Naive thymus-derived CD4-positive, alpha-beta T cell (primary cell): ENCODE measurements at regions of chr5 and their contacts with region 1.

Region 1: GRCh38 chr5:148374692-148375360 is 8.9 kb upstream of the FBXO38 start:
- DNase-seq: peak in 6 of 9 donors; percentile 20 to 38 (median 24)
- ATAC-seq: peak; percentile 84
- H3K4me3 ChIP-seq: no peak overlapping the region
- H3K4me3 Mint-ChIP-seq: no peak overlapping the region
- H3K27ac ChIP-seq: no peak overlapping the region
- H3K27ac Mint-ChIP-seq: no peak overlapping the region
- H3K4me1 ChIP-seq: peaks cover 0 to 5% of the 10 kb centered on the region in 2 donors
- H3K4me1 Mint-ChIP-seq: peaks cover 0 to 16% (median 11%) of the 10 kb centered on the region in 7 donors
- H3K27me3 ChIP-seq: no peaks in the 10 kb centered on the region
- H3K27me3 Mint-ChIP-seq: no peaks in the 10 kb centered on the region

Region 2: DNA sequence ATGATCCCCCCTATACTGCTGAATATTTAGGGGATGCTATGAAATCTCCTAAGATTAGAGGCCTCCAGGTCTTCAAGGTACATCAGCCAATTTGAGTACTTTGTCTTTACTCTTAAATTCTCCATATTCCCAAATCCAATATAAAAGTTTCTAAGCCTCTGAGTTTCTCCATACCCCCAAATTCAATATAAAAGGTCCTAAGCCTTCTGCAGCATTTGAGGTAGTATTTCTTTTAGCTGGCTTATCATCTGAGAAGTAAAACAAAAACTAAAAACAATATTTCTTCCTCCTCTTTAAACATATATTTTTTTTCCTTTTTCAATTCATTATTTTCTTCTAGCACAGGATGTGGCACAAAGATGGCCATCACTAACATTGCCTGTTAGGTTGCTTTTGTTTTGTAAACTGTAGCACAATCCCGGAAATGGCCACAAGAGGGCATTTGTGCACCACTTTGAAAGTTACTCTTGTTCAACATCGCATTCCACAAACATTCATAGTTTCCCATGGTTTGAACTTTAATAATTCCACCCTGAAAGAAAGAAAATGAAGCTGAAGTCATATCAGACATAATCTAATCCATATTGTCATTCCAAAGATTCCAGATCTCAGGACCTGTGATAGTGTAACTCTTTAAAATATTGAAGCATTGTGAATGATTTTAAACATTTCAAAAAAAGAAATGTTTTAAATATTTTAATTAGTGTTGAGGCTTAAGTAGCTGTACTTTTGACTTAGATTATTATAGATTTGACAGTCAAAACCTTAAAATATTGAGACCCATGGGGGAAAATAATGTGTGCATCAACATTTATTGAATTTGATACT is 517.3 kb before region 1 on chr5:
- CTCF ChIA-PET with region 1: no interaction called
- POLR2A ChIA-PET with region 1: no interaction called
- intact Hi-C with region 1: loop called in 1 of 2 experiments (anchors 5 kb)
- DNase-seq: peak in 5 of 9 donors; percentile 7 to 32 (median 11)
- ATAC-seq: peak; percentile 57
- H3K4me3 ChIP-seq: no peak overlapping the region
- H3K4me3 Mint-ChIP-seq: no peak overlapping the region
- H3K27ac ChIP-seq: no peak overlapping the region
- H3K27ac Mint-ChIP-seq: no peak overlapping the region
- H3K4me1 ChIP-seq: no peaks in the 10 kb centered on the region
- H3K4me1 Mint-ChIP-seq: peaks cover 0 to 4% (median 0%) of the 10 kb centered on the region in 7 donors
- H3K27me3 ChIP-seq: peaks cover 0 to 3% of the 10 kb centered on the region in 2 donors
- H3K27me3 Mint-ChIP-seq: peaks cover 4 to 16% (median 9%) of the 10 kb centered on the region in 5 donors

Region 3: DNA sequence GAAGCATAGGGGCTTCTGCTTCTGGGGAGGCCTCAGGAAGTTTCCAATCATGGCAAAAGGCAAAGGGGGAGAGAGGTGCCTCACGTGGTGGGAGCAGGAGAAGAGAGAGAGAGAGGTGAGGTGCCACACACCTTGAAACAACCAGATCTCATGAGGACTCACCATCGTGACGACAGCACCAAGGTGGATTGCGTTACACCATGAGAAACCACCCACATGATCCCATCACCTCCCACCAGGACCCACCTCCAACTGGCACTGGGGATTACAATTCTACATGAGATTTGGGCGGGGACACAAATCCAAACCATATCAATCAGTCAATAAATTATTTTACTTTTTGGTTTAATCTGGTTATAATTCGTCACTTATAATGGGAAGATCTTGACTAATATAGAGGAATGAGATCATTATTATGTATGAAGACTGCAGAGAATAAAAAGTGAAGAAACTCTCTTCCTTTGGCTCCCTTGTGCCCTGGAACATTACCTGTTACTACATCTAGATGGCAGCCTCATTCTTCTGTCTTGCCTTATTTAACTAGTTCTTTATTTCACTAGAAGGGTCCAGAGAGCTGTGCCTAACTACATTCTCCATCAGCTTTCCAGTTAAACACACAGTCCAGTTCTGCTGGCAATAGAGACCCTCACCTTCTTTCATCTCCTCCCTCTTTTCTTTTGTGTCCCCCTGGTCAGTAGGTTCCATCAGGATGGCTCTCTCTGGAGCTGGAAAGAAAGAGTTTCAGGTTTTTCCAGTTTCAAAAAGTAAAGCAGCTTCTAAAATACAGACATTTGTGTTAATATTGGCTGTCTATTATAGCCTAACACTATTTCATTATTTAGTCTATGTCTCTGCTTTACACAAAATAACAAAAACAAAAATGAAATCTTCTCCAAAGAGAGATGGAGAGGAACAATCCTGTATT is 84.3 kb before region 1 on chr5:
- CTCF ChIA-PET with region 1: interaction called, 9 read pairs
- POLR2A ChIA-PET with region 1: no interaction called
- intact Hi-C with region 1: loop called in 1 of 2 experiments (anchors 1 kb)
- DNase-seq: peak in 2 of 9 donors; percentile 3 to 14
- ATAC-seq: peak; percentile 26
- H3K4me3 ChIP-seq: no peak overlapping the region
- H3K4me3 Mint-ChIP-seq: no peak overlapping the region
- H3K27ac ChIP-seq: no peak overlapping the region
- H3K27ac Mint-ChIP-seq: no peak overlapping the region
- H3K4me1 ChIP-seq: no peaks in the 10 kb centered on the region
- H3K4me1 Mint-ChIP-seq: no peaks in the 10 kb centered on the region
- H3K27me3 ChIP-seq: no peaks in the 10 kb centered on the region
- H3K27me3 Mint-ChIP-seq: peaks cover 0 to 2% (median 0%) of the 10 kb centered on the region in 5 donors

Region 4: DNA sequence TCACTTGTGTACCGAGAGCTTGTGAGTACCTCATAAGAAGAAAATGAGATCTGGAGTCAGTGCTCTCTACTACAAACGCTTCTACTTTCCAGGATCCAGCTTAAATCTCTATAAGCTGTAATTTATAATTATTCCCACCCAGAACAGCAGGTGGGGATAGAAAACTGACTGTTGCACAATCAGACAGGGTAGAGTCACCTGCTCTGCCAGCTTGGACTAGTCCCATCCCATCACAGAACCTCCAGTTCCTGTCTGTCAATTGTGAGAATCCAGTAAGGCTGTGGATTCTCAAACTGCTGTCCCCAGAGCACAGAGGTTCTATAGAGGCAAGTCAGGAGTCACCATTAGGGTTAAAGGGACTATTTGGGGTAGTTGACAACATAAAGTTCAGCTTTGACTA is 60.6 kb before region 1 on chr5:
- CTCF ChIA-PET with region 1: interaction called, 4 read pairs
- POLR2A ChIA-PET with region 1: no interaction called
- intact Hi-C with region 1: loop called in 1 of 2 experiments (anchors 5 kb)
- DNase-seq: peak in 1 of 9 donors; percentile 8
- ATAC-seq: no peak
- H3K4me3 ChIP-seq: no peak overlapping the region
- H3K4me3 Mint-ChIP-seq: no peak overlapping the region
- H3K27ac ChIP-seq: no peak overlapping the region
- H3K27ac Mint-ChIP-seq: no peak overlapping the region
- H3K4me1 ChIP-seq: no peaks in the 10 kb centered on the region
- H3K4me1 Mint-ChIP-seq: no peaks in the 10 kb centered on the region
- H3K27me3 ChIP-seq: no peaks in the 10 kb centered on the region
- H3K27me3 Mint-ChIP-seq: peaks cover 0 to 7% (median 0%) of the 10 kb centered on the region in 5 donors

Region 5: GRCh38 chr5:148507648-148508047 is 132.8 kb after region 1 on chr5:
- CTCF ChIA-PET with region 1: no interaction called
- POLR2A ChIA-PET with region 1: no interaction called
- intact Hi-C with region 1: no loop called
- DNase-seq: no peak
- ATAC-seq: no peak
- H3K4me3 ChIP-seq: no peak overlapping the region
- H3K4me3 Mint-ChIP-seq: no peak overlapping the region
- H3K27ac ChIP-seq: no peak overlapping the region
- H3K27ac Mint-ChIP-seq: no peak overlapping the region
- H3K4me1 ChIP-seq: no peaks in the 10 kb centered on the region
- H3K4me1 Mint-ChIP-seq: no peaks in the 10 kb centered on the region
- H3K27me3 ChIP-seq: no peaks in the 10 kb centered on the region
- H3K27me3 Mint-ChIP-seq: peaks cover 0 to 11% (median 5%) of the 10 kb centered on the region in 5 donors

Region 6: GRCh38 chr5:149172261-149172660 is 797.4 kb after region 1 on chr5:
- CTCF ChIA-PET with region 1: no interaction called
- POLR2A ChIA-PET with region 1: no interaction called
- intact Hi-C with region 1: no loop called
- DNase-seq: no peak
- ATAC-seq: no peak
- H3K4me3 ChIP-seq: no peak overlapping the region
- H3K4me3 Mint-ChIP-seq: no peak overlapping the region
- H3K27ac ChIP-seq: no peak overlapping the region
- H3K27ac Mint-ChIP-seq: no peak overlapping the region
- H3K4me1 ChIP-seq: no peaks in the 10 kb centered on the region
- H3K4me1 Mint-ChIP-seq: peaks cover 0 to 2% (median 0%) of the 10 kb centered on the region in 7 donors
- H3K27me3 ChIP-seq: no peaks in the 10 kb centered on the region
- H3K27me3 Mint-ChIP-seq: peaks cover 10 to 25% (median 16%) of the 10 kb centered on the region in 5 donors